ENCODE measurements at regions of chr17 and their contacts with region 1.

Region 1: GRCh38 chr17:63611354-63611753 is 10.7 kb downstream of the TACO1 start:
- DNase-seq: no peak
- H3K4me3 ChIP-seq: no peak overlapping the region
- CTCF ChIP-seq: no peak

Region 2: GRCh38 chr17:63425482-63425881 is 185.9 kb before region 1 on chr17:
- CTCF ChIA-PET with region 1: interaction called, 398 read pairs
- POLR2A ChIA-PET with region 1: no interaction called
- DNase-seq: no peak
- H3K4me3 ChIP-seq: no peak overlapping the region
- CTCF ChIP-seq: peak; percentile 77

Region 3: DNA sequence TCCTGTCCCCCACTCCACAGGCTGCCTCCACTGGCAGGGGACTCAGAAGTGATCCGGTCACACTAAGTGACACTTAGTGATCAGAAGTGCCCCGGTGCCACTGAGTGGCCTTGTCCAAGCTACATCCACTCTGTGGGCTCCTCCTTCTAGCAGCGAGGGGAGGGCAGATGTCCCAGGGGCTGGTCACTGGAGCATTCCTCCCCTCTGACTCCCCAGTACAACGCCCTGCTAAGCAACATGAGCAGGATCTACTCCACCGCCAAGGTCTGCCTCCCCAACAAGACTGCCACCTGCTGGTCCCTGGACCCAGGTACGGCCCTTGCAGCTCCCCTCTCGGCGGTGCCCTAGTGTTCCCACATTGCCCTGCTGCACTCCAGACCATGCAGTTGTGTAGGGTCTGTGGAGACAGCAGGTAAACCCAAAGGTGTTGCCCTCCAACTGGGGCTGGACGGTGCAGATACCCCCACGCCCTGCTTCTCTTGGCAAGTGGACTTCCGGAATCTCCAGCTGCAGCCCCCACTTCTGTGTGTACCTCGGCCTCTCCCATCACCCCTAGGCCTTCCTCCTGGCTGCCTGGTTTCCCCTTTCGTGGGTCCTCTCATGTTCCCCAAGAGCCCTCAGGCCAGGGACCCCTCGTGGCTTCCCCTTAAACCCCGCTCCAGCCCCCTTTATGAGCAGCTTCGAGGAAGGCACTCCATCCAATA is 132.4 kb before region 1 on chr17:
- CTCF ChIA-PET with region 1: interaction called, 13 read pairs
- POLR2A ChIA-PET with region 1: no interaction called
- DNase-seq: peak; percentile 65
- H3K4me3 ChIP-seq: peak overlapping the region; percentile 8; the same call in 1 of the 2 replicates
- CTCF ChIP-seq: peak; percentile 99

Region 4: DNA sequence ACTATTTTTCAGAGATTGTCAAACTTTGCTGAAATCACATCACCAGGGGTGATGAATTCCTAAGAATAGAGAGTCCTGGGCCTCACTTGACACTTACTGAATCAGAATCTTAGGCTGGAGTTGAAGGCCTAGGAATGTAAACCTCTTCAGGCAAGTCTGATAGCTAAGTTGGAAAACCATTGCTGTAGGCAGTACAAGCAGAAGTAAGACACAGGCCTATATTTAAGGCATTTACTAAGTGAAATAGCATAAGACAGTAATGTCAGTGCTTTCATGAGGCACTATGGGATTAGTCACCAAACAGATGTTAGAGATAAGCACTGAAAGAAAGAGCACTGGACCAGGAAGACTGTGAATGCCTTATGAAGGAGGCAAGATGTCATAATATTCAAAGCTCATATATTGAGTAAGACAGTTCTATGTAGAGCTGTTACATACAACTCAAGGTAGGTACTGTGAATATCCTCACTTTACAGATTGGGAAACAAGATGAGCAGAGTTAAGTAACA is 39.5 kb before region 1 on chr17:
- CTCF ChIA-PET with region 1: interaction called, 30 read pairs
- POLR2A ChIA-PET with region 1: no interaction called
- DNase-seq: peak; percentile 31
- H3K4me3 ChIP-seq: no peak overlapping the region
- CTCF ChIP-seq: no peak

Region 5: DNA sequence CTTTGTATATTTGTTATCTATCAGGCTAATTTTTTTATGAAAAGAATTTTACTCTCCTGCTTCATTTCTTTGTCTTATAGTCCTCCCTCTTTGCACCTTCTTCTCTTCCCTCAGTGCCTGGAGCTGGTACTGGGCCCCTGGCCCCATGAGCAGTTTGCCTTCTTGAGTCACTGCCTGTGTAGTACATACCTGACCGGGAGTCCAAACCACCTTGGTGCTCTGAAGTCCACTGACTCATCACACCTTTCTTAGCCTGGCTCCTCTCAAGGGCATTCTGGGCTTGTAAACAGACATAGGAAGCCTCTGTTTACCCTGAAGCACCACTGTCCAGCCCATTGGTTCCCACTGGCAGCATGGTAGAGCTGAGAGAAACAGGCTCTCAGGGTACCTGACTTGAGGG is 21.7 kb before region 1 on chr17:
- CTCF ChIA-PET with region 1: interaction called, 17 read pairs
- POLR2A ChIA-PET with region 1: no interaction called
- DNase-seq: no peak
- H3K4me3 ChIP-seq: no peak overlapping the region
- CTCF ChIP-seq: no peak

Region 6: DNA sequence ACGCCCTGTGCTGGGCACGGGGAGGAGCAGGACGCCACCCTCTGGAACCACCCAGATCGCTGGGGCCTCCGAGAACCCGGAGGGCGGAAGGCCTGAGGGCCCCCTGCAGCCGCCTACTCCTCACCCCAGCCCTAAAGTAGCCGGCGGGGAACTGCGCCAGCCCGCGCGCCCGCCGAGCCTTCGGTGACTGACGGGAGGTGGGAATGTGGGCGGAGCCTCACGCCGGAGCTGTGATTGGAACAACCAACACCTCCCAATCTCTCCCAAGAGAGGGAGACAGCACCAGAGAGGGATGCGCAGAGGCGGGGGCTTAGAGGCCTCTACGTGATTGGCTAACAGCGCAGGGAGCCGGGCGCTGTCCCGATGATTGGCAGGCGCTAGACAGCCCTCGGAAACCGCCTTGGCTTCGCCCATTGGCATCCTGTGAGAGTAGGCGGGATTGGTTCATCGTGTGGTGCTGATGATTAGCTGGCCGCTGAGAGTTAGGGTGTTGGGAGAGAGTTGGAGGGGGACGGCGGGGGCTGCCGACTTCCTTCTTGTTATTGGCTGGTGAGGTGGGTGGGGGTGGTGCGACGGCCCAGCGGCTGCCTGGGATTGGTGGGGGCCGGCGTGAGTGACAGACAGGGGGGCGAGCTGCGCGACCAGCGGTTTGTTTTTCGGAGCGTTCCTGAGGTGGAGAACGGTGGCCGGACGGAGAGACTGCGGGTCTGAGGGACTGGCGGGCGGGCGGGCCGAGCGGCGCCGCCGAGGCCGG is 10.6 kb after region 1 on chr17 and contains the start of gene MAP3K3:
- CTCF ChIA-PET with region 1: interaction called, 55 read pairs
- POLR2A ChIA-PET with region 1: interaction called, 12 read pairs
- DNase-seq: peak; percentile 99
- H3K4me3 ChIP-seq: peak within 1 kb of the TSS; percentile 80
- CTCF ChIP-seq: no peak

Region 7: GRCh38 chr17:63919311-63919723 is 308.0 kb after region 1 on chr17:
- CTCF ChIA-PET with region 1: no interaction called
- POLR2A ChIA-PET with region 1: no interaction called
- DNase-seq: no peak
- H3K4me3 ChIP-seq: no peak overlapping the region
- CTCF ChIP-seq: peak; percentile 89

Measured in AG04449 (cell line).